Activated naive CD4-positive, alpha-beta T cell treated with anti-CD3 and anti-CD28 coated beads for 36 hours (primary cell): ENCODE measurements at regions of chr7 and their contacts with region 1.

Region 1: DNA sequence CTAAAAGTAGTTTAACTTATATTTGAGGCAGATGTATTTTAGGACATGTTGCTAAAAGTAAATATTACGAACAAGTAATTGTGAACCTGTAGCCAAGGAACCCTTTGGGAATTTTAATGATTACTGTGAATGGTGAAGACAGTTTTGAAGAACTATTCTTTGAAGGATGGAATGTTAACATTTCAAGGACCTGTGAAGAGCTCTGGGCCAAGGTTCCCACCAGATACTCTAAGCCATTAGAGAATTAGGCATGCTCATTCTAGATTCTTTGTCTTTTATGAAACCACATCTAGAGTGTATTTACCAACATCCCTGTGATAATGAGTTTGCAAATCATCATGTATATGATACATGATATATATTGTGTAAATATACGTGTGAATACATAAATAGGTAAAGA is 99.8 kb downstream of the SEPTIN7 start:
- DNase-seq: no peak
- H3K4me3 Mint-ChIP-seq: no peak overlapping the region
- H3K27ac Mint-ChIP-seq: peak overlapping the region; percentile 11
- H3K4me1 Mint-ChIP-seq: peaks cover 5% of the 10 kb centered on the region
- H3K27me3 Mint-ChIP-seq: no peaks in the 10 kb centered on the region

Region 2: GRCh38 chr7:35578536-35578935 is 322.1 kb before region 1 on chr7:
- CTCF ChIA-PET with region 1: no interaction called
- intact Hi-C with region 1: no loop called
- DNase-seq: no peak
- H3K4me3 Mint-ChIP-seq: no peak overlapping the region
- H3K27ac Mint-ChIP-seq: no peak overlapping the region
- H3K4me1 Mint-ChIP-seq: no peaks in the 10 kb centered on the region
- H3K27me3 Mint-ChIP-seq: peaks cover 3% of the 10 kb centered on the region

Region 3: GRCh38 chr7:35647171-35647574 is 253.5 kb before region 1 on chr7:
- CTCF ChIA-PET with region 1: no interaction called
- intact Hi-C with region 1: loop called (anchors 5 kb)
- DNase-seq: no peak
- H3K4me3 Mint-ChIP-seq: no peak overlapping the region
- H3K27ac Mint-ChIP-seq: no peak overlapping the region
- H3K4me1 Mint-ChIP-seq: peaks cover 56% of the 10 kb centered on the region
- H3K27me3 Mint-ChIP-seq: no peaks in the 10 kb centered on the region